ENCODE measurements at regions of chr6 and their contacts with region 1.

Region 1: DNA sequence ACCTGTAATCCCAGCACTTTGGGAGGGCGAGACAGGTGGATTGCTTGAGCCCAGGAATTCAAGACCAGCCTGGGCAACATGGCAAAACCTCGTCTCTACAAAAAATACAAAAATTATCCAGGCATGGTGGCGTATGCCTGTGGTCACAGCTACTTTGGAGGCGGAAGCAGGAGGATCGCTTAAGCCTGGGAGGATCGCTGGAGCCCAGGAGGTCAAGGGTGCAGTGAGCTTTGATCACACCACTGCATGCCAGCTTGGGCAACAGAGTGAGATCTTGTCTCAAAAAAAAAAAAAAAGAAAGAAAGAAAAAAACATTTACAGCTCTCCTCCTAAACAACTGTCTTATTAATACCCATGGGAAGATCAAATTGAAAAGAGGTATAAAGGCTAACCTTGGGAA is 8.8 kb upstream of the MYMX start:
- DNase-seq: no peak
- ATAC-seq: no peak
- H3K4me3 ChIP-seq: no peak overlapping the region
- H3K27ac ChIP-seq: no peak overlapping the region
- H3K4me1 ChIP-seq: no peaks in the 10 kb centered on the region
- H3K27me3 ChIP-seq: peaks cover 16% of the 10 kb centered on the region
- CTCF ChIP-seq: no peak
- POLR2A ChIP-seq: no peak
- RAD21 ChIP-seq: no peak

Region 2: GRCh38 chr6:44127186-44128019 is 80.6 kb before region 1 on chr6 and contains the starts of genes MRPL14 and TMEM63B:
- CTCF ChIA-PET with region 1: no interaction called
- POLR2A ChIA-PET with region 1: no interaction called
- dilution Hi-C with region 1: no loop called
- in situ Hi-C with region 1: no loop called
- intact Hi-C with region 1: no loop called
- DNase-seq: peak; percentile 88
- ATAC-seq: peak; percentile 89
- H3K4me3 ChIP-seq: peak within 1 kb of the TSS; percentile 94
- H3K27ac ChIP-seq: peak within 1 kb of the TSS; percentile 95
- H3K4me1 ChIP-seq: peaks cover 18% of the 10 kb centered on the region
- H3K27me3 ChIP-seq: no peaks in the 10 kb centered on the region
- CTCF ChIP-seq: no peak
- POLR2A ChIP-seq: peak; percentile 47; the same call in 1 of the 2 replicates
- RAD21 ChIP-seq: no peak
- total RNA-seq, gene MRPL14: 43.7 and 52.8 TPM in 2 replicates
- total RNA-seq, gene TMEM63B: 12.2 and 12.8 TPM in 2 replicates

Region 3: GRCh38 chr6:44161997-44162338 is 46.0 kb before region 1 on chr6:
- CTCF ChIA-PET with region 1: no interaction called
- POLR2A ChIA-PET with region 1: no interaction called
- dilution Hi-C with region 1: no loop called
- in situ Hi-C with region 1: no loop called
- intact Hi-C with region 1: no loop called
- DNase-seq: peak; percentile 67
- ATAC-seq: peak; percentile 38
- H3K4me3 ChIP-seq: no peak overlapping the region
- H3K27ac ChIP-seq: no peak overlapping the region
- H3K4me1 ChIP-seq: no peaks in the 10 kb centered on the region
- H3K27me3 ChIP-seq: peaks cover 26% of the 10 kb centered on the region
- CTCF ChIP-seq: no peak
- POLR2A ChIP-seq: no peak
- RAD21 ChIP-seq: no peak

Region 4: GRCh38 chr6:44190715-44191114 is 17.3 kb before region 1 on chr6:
- CTCF ChIA-PET with region 1: interaction called, 3 read pairs
- POLR2A ChIA-PET with region 1: no interaction called
- dilution Hi-C with region 1: no loop called
- in situ Hi-C with region 1: no loop called
- intact Hi-C with region 1: loop called (anchors 2 kb)
- DNase-seq: no peak
- ATAC-seq: no peak
- H3K4me3 ChIP-seq: no peak overlapping the region
- H3K27ac ChIP-seq: no peak overlapping the region
- H3K4me1 ChIP-seq: no peaks in the 10 kb centered on the region
- H3K27me3 ChIP-seq: peaks cover 25% of the 10 kb centered on the region
- CTCF ChIP-seq: no peak
- POLR2A ChIP-seq: no peak
- RAD21 ChIP-seq: no peak

Measured in IMR-90 (cell line).